ENCODE measurements at regions of chr22 and their contacts with region 1.

Region 1: GRCh38 chr22:42780070-42780540 is 59.4 kb upstream of the A4GALT start:
- DNase-seq: peak in 7 of 9 donors; percentile 44 to 72 (median 62)
- ATAC-seq: peak; percentile 73
- H3K4me3 ChIP-seq: no peak overlapping the region
- H3K4me3 Mint-ChIP-seq: no peak overlapping the region
- H3K27ac ChIP-seq: no peak overlapping the region
- H3K27ac Mint-ChIP-seq: no peak overlapping the region
- H3K4me1 ChIP-seq: no peaks in the 10 kb centered on the region
- H3K4me1 Mint-ChIP-seq: peaks cover 0 to 2% (median 0%) of the 10 kb centered on the region in 7 donors
- H3K27me3 ChIP-seq: no peaks in the 10 kb centered on the region
- H3K27me3 Mint-ChIP-seq: no peaks in the 10 kb centered on the region

Region 2: GRCh38 chr22:42797011-42797410 is 16.9 kb after region 1 on chr22:
- CTCF ChIA-PET with region 1: no interaction called
- POLR2A ChIA-PET with region 1: no interaction called
- intact Hi-C with region 1: no loop called
- DNase-seq: no peak
- ATAC-seq: no peak
- H3K4me3 ChIP-seq: no peak overlapping the region
- H3K4me3 Mint-ChIP-seq: no peak overlapping the region
- H3K27ac ChIP-seq: no peak overlapping the region
- H3K27ac Mint-ChIP-seq: peak overlapping the region in 1 of 9 donors; percentile 53
- H3K4me1 ChIP-seq: no peaks in the 10 kb centered on the region
- H3K4me1 Mint-ChIP-seq: peaks cover 0 to 5% (median 0%) of the 10 kb centered on the region in 7 donors
- H3K27me3 ChIP-seq: no peaks in the 10 kb centered on the region
- H3K27me3 Mint-ChIP-seq: no peaks in the 10 kb centered on the region

Region 3: DNA sequence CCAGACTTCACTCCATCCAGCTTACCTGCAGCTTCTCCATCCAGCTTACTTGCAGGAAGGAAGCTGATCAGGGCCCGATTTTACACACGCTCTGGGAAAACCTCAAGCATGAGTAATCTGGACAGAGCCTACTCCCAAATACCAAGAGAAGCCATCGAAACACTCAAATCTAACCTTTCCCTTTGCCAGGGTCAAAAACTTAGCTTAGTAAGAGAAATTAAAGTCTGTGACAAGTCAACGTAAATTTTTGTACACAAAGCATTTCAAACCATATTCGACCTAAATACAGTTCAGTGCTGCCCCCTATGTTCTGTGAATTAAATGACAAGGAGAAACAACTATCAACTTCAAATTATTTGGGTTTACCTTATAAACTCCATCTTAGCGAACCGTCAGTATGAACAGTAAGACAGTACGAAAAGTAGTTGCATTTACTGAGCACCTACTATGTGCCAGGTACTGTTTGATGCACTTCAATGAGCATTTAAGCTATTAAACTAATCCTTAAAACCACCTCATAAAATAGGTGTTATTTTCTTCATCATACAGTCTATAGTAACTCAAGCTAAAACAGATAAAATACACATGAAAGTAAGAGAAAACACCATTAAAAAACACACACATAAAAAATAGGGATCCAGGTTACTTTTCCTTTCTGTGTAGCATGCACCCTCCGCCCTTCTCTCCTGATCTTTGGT is 40.1 kb after region 1 on chr22:
- CTCF ChIA-PET with region 1: interaction called, 3 read pairs
- POLR2A ChIA-PET with region 1: no interaction called
- intact Hi-C with region 1: loop called in 1 of 2 experiments (anchors 5 kb)
- DNase-seq: peak in 4 of 9 donors; percentile 8 to 28 (median 10)
- ATAC-seq: no peak
- H3K4me3 ChIP-seq: no peak overlapping the region
- H3K4me3 Mint-ChIP-seq: no peak overlapping the region
- H3K27ac ChIP-seq: no peak overlapping the region
- H3K27ac Mint-ChIP-seq: peak overlapping the region in 4 of 9 donors; percentile 0 to 36 (median 22)
- H3K4me1 ChIP-seq: no peaks in the 10 kb centered on the region
- H3K4me1 Mint-ChIP-seq: peaks cover 0 to 9% (median 4%) of the 10 kb centered on the region in 7 donors
- H3K27me3 ChIP-seq: no peaks in the 10 kb centered on the region
- H3K27me3 Mint-ChIP-seq: no peaks in the 10 kb centered on the region

Region 4: DNA sequence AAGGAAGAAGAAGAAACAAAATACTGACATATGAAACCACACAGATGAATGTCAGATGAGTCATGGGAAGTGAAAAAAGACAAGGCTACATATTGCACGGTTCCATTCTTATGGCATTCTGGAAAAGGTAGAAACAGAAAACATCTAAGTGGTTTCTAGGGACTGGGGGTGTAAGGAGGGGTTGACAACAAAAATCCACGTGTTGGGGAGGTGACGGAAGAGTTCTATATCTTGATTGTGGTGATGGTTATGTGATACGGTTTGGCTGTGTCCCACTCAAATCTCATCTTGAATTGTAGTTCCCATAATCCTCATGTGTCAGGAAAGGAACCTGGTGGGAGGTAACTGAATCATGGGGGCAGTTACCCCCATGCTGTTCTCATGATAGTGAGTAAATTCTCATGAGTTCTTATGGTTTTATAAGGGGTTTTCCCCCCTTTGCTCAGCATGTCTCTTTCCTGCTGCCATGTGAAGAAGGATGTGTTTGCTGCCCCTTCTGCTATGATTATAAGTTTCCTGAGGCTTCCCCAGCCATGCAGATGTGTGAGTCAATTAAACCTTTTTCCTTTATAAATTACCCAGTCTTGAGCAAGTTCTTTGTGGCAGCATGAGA is 83.3 kb after region 1 on chr22:
- CTCF ChIA-PET with region 1: no interaction called
- POLR2A ChIA-PET with region 1: no interaction called
- intact Hi-C with region 1: loop called in 1 of 2 experiments (anchors 1 kb)
- DNase-seq: peak in 1 of 9 donors; percentile 44
- ATAC-seq: peak; percentile 40
- H3K4me3 ChIP-seq: no peak overlapping the region
- H3K4me3 Mint-ChIP-seq: no peak overlapping the region
- H3K27ac ChIP-seq: no peak overlapping the region
- H3K27ac Mint-ChIP-seq: peak overlapping the region in 5 of 9 donors; percentile 0 to 39 (median 12)
- H3K4me1 ChIP-seq: no peaks in the 10 kb centered on the region
- H3K4me1 Mint-ChIP-seq: peaks cover 0 to 16% (median 9%) of the 10 kb centered on the region in 7 donors
- H3K27me3 ChIP-seq: no peaks in the 10 kb centered on the region
- H3K27me3 Mint-ChIP-seq: no peaks in the 10 kb centered on the region

Region 5: GRCh38 chr22:43036282-43036829 is 256.3 kb after region 1 on chr22:
- CTCF ChIA-PET with region 1: no interaction called
- POLR2A ChIA-PET with region 1: no interaction called
- intact Hi-C with region 1: loop called in 1 of 2 experiments (anchors 5 kb)
- DNase-seq: no peak
- ATAC-seq: no peak
- H3K4me3 ChIP-seq: no peak overlapping the region
- H3K4me3 Mint-ChIP-seq: no peak overlapping the region
- H3K27ac ChIP-seq: no peak overlapping the region
- H3K27ac Mint-ChIP-seq: no peak overlapping the region
- H3K4me1 ChIP-seq: no peaks in the 10 kb centered on the region
- H3K4me1 Mint-ChIP-seq: peaks cover 0 to 8% (median 3%) of the 10 kb centered on the region in 7 donors
- H3K27me3 ChIP-seq: no peaks in the 10 kb centered on the region
- H3K27me3 Mint-ChIP-seq: no peaks in the 10 kb centered on the region

Region 6: GRCh38 chr22:43088979-43089717 is 309.0 kb after region 1 on chr22 and contains the start of gene TTLL1:
- CTCF ChIA-PET with region 1: no interaction called
- POLR2A ChIA-PET with region 1: no interaction called
- intact Hi-C with region 1: loop called in 1 of 2 experiments (anchors 5 kb)
- DNase-seq: peak; percentile 79 to 90 (median 87)
- ATAC-seq: peak; percentile 93
- H3K4me3 ChIP-seq: peak within 1 kb of the TSS; percentile 49
- H3K4me3 Mint-ChIP-seq: peak within 1 kb of the TSS; percentile 77 to 98 (median 92)
- H3K27ac ChIP-seq: peak within 1 kb of the TSS; percentile 60
- H3K27ac Mint-ChIP-seq: peak within 1 kb of the TSS; percentile 49 to 96 (median 82)
- H3K4me1 ChIP-seq: peaks cover 8 to 13% of the 10 kb centered on the region in 2 donors
- H3K4me1 Mint-ChIP-seq: peaks cover 0 to 19% (median 17%) of the 10 kb centered on the region in 7 donors
- H3K27me3 ChIP-seq: no peaks in the 10 kb centered on the region
- H3K27me3 Mint-ChIP-seq: no peaks in the 10 kb centered on the region
- total RNA-seq, gene TTLL1: 4.6 to 7.7 (median 6.9) TPM

Region 7: DNA sequence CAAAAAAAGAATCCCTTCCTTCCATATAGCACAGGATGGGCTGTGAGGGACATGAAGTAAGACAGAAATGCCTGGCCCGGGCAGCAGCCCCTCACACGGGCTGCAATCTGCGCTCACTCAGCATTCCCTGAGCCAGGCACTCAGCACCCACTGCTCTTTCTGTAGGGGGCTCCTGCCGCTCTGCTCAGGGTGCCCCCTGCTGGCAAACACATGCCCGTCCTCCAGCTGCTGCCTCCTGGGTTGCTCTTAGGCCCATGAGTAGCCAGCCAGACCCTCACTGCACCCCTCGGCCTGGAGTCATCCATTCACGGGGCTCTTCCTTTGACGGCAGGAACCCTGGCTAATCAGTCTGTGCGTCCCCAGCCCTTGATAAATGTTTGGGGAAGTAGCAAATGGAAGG is 356.1 kb after region 1 on chr22:
- CTCF ChIA-PET with region 1: no interaction called
- POLR2A ChIA-PET with region 1: no interaction called
- intact Hi-C with region 1: loop called in 1 of 2 experiments (anchors 1 kb)
- DNase-seq: peak in 5 of 9 donors; percentile 14 to 43 (median 27)
- ATAC-seq: peak; percentile 75
- H3K4me3 ChIP-seq: no peak overlapping the region
- H3K4me3 Mint-ChIP-seq: no peak overlapping the region
- H3K27ac ChIP-seq: no peak overlapping the region
- H3K27ac Mint-ChIP-seq: peak overlapping the region in 1 of 9 donors; percentile 55
- H3K4me1 ChIP-seq: no peaks in the 10 kb centered on the region
- H3K4me1 Mint-ChIP-seq: peaks cover 4 to 16% (median 8%) of the 10 kb centered on the region in 7 donors
- H3K27me3 ChIP-seq: no peaks in the 10 kb centered on the region
- H3K27me3 Mint-ChIP-seq: no peaks in the 10 kb centered on the region

Measured in naive thymus-derived CD4-positive, alpha-beta T cell (primary cell).